ENCODE measurements at regions of chr1 and their contacts with region 1.

Region 1: DNA sequence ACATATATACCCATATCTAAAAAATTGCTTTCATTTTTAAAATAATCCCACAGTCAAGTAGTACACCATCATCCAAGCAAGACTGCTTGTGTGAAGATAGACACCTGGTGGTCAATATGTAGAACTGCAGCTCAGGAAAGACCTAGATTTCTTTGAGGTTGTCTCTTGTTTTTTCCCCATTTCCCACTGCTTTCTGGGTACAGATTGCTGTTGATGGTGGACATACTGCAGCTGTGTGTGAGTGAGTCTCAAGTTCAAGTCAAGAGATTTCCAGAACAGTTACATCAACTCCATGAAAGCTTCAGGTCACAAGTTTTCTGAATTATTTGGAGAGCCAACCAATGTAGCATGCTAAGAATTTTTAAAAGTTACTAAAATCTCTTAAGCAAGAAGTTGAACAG is 306.4 kb downstream of the DUSP10 start:
- DNase-seq: peak; percentile 32 to 68 (median 50)
- ATAC-seq: peak; percentile 78
- H3K4me3 ChIP-seq: no peak overlapping the region
- H3K27ac ChIP-seq: no peak overlapping the region
- H3K4me1 ChIP-seq: no peaks in the 10 kb centered on the region
- H3K27me3 ChIP-seq: no peaks in the 10 kb centered on the region
- CTCF ChIP-seq: peak; percentile 62 to 80 (median 76); a peak in 5 of 6 replicates
- EP300 ChIP-seq: no peak
- POLR2A ChIP-seq: no peak
- RAD21 ChIP-seq: peak; percentile 87 to 91

Region 2: DNA sequence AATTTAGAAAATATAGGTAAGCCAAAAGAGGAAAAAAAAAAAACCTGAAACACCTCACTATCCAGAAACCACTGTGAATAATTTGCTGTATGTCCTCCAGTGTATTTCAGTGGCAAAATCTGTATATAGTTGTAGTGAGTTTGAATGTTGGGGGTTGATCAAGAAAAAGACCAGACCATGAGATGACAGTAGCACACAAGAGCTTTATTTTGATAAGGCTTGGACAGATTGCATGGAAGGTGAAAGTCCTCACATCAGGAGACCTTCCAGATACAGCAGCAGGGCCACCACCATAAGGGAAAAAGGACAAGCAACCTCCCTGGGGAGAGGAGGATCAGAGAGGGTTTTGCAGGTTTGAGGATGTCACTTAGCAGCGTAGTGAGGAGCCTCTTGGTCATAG is 761.6 kb before region 1 on chr1:
- CTCF ChIA-PET with region 1: no interaction called
- POLR2A ChIA-PET with region 1: no interaction called
- in situ Hi-C with region 1: no loop called
- intact Hi-C with region 1: loop called (anchors 10 kb)
- DNase-seq: no peak
- ATAC-seq: no peak
- H3K4me3 ChIP-seq: no peak overlapping the region
- H3K27ac ChIP-seq: no peak overlapping the region
- H3K4me1 ChIP-seq: no peaks in the 10 kb centered on the region
- H3K27me3 ChIP-seq: no peaks in the 10 kb centered on the region
- CTCF ChIP-seq: no peak
- EP300 ChIP-seq: no peak
- POLR2A ChIP-seq: no peak
- RAD21 ChIP-seq: no peak

Region 3: GRCh38 chr1:220810179-220810653 is 625.3 kb before region 1 on chr1:
- CTCF ChIA-PET with region 1: interaction called, 3 read pairs
- POLR2A ChIA-PET with region 1: no interaction called
- in situ Hi-C with region 1: loop called (anchors 10 kb)
- intact Hi-C with region 1: loop called (anchors 1 kb)
- DNase-seq: peak; percentile 74 to 86 (median 82)
- ATAC-seq: peak; percentile 93
- H3K4me3 ChIP-seq: no peak overlapping the region
- H3K27ac ChIP-seq: no peak overlapping the region
- H3K4me1 ChIP-seq: peaks cover 2 to 4% of the 10 kb centered on the region in 2 experiments; a peak in 3 of 5 replicates
- H3K27me3 ChIP-seq: peaks cover 2 to 20% of the 10 kb centered on the region in 2 experiments; a peak in 3 of 5 replicates
- CTCF ChIP-seq: peak; percentile 91 to 95 (median 92)
- EP300 ChIP-seq: no peak
- POLR2A ChIP-seq: no peak
- RAD21 ChIP-seq: peak; percentile 69 to 80

Region 4: DNA sequence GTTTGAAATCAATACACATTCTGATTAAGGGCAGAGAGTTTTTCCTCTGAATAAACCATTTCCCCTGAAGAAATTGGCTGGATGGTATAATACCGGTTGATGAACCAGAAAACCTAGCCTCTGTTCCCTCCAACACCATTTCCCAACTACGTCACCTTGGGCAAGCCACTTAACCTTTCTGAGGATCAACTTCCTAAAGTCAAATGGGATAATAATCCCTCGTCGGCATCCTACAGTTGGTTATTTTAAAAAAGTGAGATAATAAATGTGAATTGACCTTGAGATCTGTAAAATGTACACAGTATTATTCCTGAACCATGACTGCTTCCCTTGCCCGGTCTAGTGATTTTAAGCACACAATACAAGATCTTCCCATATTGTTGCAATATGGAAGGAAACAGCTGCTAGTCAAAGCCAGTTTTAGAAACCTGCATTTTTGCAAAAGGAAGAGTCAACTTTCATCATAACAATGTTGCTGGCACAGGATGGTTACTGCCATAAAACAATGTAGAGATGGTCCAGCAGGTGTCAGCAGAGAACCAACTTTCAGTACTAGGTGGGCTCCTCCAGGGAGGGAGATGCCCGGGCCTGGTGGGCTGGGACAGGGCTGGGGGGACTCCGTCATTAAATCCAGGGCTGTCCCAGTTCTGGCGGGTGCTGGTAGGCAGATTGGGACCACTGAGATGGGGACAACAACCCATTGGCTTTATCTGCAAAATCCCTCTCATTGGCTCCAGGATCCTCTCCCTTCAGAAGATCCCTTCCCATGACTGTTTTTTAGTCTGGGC is 561.4 kb before region 1 on chr1:
- CTCF ChIA-PET with region 1: interaction called, 9 read pairs
- POLR2A ChIA-PET with region 1: no interaction called
- in situ Hi-C with region 1: no loop called
- intact Hi-C with region 1: loop called (anchors 1 kb)
- DNase-seq: peak; percentile 44 to 58 (median 54)
- ATAC-seq: peak; percentile 72
- H3K4me3 ChIP-seq: no peak overlapping the region
- H3K27ac ChIP-seq: no peak overlapping the region
- H3K4me1 ChIP-seq: peaks cover 0 to 9% of the 10 kb centered on the region in 2 experiments; a peak in 1 of 5 replicates
- H3K27me3 ChIP-seq: peaks cover 5 to 14% of the 10 kb centered on the region in 2 experiments; a peak in 2 of 5 replicates
- CTCF ChIP-seq: peak; percentile 65 to 75 (median 71)
- EP300 ChIP-seq: no peak
- POLR2A ChIP-seq: no peak
- RAD21 ChIP-seq: peak; percentile 83 to 87

Region 5: DNA sequence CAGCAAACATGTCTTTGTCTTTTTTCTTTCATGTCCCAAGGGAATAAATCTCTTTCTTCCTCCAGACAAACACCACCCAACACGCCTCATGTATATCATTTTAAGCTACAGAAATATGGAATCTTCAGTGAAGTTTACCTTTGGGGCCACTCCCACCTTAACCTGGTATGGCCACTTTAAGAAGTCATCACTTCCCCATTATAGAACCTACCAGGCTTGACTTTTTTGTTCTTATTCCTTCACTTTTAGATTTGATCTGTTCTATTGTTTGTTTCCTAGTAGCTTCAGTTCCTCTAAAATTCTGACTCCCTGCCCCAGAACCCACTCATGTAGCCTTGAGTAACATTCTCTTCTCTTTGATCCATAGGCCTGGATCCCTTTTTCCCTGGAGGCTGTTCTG is 329.9 kb before region 1 on chr1:
- CTCF ChIA-PET with region 1: no interaction called
- POLR2A ChIA-PET with region 1: no interaction called
- in situ Hi-C with region 1: no loop called
- intact Hi-C with region 1: no loop called
- DNase-seq: no peak
- ATAC-seq: no peak
- H3K4me3 ChIP-seq: no peak overlapping the region
- H3K27ac ChIP-seq: no peak overlapping the region
- H3K4me1 ChIP-seq: no peaks in the 10 kb centered on the region
- H3K27me3 ChIP-seq: no peaks in the 10 kb centered on the region
- CTCF ChIP-seq: no peak
- EP300 ChIP-seq: no peak
- POLR2A ChIP-seq: no peak
- RAD21 ChIP-seq: no peak

Region 6: DNA sequence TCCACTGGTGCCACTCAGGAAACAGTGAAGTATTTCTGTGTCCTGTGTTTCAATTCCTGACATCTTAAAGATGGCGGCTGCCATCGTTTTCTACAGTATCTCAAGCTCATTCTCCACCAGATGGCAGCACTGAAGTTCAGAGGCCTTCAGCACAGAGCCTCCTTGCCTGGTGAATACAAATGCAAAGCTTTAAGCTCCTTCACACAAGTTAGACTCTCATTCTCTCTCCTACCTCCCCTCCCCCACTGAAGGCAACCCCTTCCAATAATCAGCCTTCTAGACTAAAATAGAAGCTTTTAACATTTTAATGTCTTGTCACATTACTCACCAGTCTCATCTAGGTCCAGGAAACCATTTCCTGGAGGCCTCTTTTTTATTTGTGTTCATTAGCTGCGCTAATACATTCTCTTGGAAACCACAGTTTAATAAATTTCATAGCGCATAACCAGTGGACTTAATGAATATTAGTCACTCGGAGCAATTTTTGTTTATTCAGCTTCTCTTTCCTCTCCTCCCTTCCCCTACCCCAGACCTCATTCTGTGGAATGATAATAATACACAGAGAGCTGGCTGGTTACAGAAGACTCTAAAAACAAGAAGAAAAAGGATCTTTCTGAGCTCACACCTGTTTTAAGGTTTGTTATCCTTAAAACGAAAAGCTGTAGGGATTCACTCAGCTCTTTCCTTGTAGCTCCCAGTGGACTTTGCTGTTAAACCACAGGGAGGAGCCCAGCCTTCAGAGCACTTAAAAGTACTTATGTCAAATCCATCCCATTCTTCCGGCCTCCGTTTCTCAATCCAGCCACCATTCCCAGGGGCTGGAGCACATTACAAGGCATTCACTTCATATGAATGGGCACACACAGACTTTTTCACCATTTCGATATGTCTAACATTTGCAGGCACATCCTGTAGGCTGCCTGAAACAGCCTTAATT is 171.4 kb before region 1 on chr1:
- CTCF ChIA-PET with region 1: no interaction called
- POLR2A ChIA-PET with region 1: no interaction called
- in situ Hi-C with region 1: no loop called
- intact Hi-C with region 1: loop called (anchors 5 kb)
- DNase-seq: peak; percentile 47 to 63 (median 50)
- ATAC-seq: peak; percentile 81
- H3K4me3 ChIP-seq: no peak overlapping the region
- H3K27ac ChIP-seq: no peak overlapping the region
- H3K4me1 ChIP-seq: no peaks in the 10 kb centered on the region
- H3K27me3 ChIP-seq: no peaks in the 10 kb centered on the region
- CTCF ChIP-seq: peak; percentile 43 to 48 (median 47); a peak in 5 of 6 replicates
- EP300 ChIP-seq: no peak
- POLR2A ChIP-seq: no peak
- RAD21 ChIP-seq: peak; percentile 56 to 62

Region 7: DNA sequence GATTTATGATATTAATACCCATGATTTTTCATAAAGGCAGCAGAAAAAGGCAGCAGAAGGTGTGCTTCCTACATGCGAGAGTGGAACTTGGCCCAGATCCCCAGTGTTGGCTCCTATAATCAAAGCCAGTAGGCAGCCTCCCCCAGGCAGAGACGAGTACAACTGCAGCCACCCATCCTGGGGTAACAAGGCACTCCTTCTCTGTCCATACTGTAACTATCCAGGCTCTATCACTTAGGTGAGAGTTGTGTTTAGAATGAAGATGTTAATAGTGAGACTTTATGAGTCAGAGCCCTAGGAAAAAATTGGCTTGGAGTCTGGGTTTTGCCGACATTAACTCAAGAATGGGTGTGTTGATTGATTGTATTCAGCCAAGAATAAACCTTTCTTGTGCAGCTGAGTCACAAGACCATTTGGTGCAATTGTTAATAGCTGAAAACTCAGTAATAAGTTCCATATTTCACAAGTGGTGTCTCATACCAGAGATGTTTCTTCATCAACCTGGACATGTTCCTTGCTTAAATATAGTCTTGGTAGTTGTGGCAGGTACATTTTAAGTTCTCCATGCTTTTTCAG is 15.9 kb before region 1 on chr1:
- CTCF ChIA-PET with region 1: no interaction called
- POLR2A ChIA-PET with region 1: no interaction called
- in situ Hi-C with region 1: no loop called
- intact Hi-C with region 1: no loop called
- DNase-seq: no peak
- ATAC-seq: no peak
- H3K4me3 ChIP-seq: no peak overlapping the region
- H3K27ac ChIP-seq: no peak overlapping the region
- H3K4me1 ChIP-seq: no peaks in the 10 kb centered on the region
- H3K27me3 ChIP-seq: no peaks in the 10 kb centered on the region
- CTCF ChIP-seq: no peak
- EP300 ChIP-seq: no peak
- POLR2A ChIP-seq: no peak
- RAD21 ChIP-seq: no peak

Region 8: DNA sequence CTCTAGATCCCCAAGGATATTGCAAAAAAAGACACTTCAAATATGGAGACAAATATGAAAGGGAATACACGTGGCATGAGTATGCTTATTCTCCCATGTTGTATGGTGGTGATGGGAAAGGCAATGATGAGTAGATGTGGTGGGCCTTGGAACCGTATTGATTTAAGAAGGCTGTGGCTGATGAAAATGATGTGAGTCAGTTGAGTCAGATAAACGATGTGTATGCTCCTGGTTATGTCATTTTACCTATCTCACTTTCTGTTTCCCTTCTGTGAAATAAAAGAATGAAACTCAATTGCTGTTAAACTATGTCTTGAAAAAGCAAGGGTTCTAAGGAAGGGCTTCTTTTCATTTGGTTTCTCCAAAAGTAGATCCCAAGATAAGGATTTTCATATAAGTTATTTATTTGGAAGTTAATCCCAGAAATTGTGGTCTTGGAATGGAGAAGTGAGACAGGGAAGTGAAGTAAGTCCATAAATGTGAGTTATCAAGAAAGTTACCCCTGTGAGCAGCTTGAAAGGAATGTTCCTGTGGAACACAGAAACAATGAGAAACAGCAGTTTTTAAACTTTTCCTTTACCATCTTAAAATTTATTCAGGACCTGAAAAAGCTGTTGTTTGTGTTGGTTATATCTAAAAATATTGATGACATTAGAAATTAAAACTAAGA is 14.4 kb after region 1 on chr1:
- CTCF ChIA-PET with region 1: no interaction called
- POLR2A ChIA-PET with region 1: no interaction called
- in situ Hi-C with region 1: no loop called
- intact Hi-C with region 1: no loop called
- DNase-seq: no peak
- ATAC-seq: no peak
- H3K4me3 ChIP-seq: no peak overlapping the region
- H3K27ac ChIP-seq: no peak overlapping the region
- H3K4me1 ChIP-seq: no peaks in the 10 kb centered on the region
- H3K27me3 ChIP-seq: no peaks in the 10 kb centered on the region
- CTCF ChIP-seq: no peak
- EP300 ChIP-seq: no peak
- POLR2A ChIP-seq: no peak
- RAD21 ChIP-seq: no peak

Region 9: DNA sequence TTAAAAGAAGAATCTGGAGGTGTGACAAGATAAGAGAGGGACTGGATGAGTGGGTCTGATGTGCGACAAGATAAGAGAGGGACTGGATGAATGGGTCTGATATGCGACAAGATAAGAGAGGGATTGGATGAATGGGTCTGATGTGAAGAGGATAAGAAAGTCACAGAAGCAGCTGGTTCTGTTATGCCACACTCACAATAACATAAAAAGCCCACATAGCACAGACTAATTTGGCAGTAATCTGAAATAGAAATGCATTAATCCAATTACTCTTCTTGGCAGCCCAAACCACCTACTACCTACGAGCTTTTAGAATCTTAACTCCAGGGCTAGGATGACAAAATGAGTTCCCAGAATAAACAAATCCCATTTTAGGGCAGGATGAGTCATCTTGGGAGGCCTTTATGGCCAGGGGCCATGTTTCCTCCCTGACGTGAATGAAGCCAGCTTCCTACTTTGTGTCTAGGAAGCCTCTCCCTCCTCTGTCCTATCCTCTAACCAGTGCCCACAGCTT is 176.8 kb after region 1 on chr1:
- CTCF ChIA-PET with region 1: no interaction called
- POLR2A ChIA-PET with region 1: no interaction called
- in situ Hi-C with region 1: no loop called
- intact Hi-C with region 1: no loop called
- DNase-seq: peak in 2 of 4 experiments; percentile 19 to 61
- ATAC-seq: peak; percentile 57; the same call in 2 of the 3 replicates
- H3K4me3 ChIP-seq: no peak overlapping the region
- H3K27ac ChIP-seq: no peak overlapping the region
- H3K4me1 ChIP-seq: peaks cover 0 to 18% of the 10 kb centered on the region in 2 experiments; a peak in 3 of 5 replicates
- H3K27me3 ChIP-seq: no peaks in the 10 kb centered on the region
- CTCF ChIP-seq: no peak
- EP300 ChIP-seq: no peak
- POLR2A ChIP-seq: no peak
- RAD21 ChIP-seq: no peak

Measured in K562 (cell line).